B cell (primary cell): ENCODE measurements at regions of chr9 and their contacts with region 1.

Region 1: DNA sequence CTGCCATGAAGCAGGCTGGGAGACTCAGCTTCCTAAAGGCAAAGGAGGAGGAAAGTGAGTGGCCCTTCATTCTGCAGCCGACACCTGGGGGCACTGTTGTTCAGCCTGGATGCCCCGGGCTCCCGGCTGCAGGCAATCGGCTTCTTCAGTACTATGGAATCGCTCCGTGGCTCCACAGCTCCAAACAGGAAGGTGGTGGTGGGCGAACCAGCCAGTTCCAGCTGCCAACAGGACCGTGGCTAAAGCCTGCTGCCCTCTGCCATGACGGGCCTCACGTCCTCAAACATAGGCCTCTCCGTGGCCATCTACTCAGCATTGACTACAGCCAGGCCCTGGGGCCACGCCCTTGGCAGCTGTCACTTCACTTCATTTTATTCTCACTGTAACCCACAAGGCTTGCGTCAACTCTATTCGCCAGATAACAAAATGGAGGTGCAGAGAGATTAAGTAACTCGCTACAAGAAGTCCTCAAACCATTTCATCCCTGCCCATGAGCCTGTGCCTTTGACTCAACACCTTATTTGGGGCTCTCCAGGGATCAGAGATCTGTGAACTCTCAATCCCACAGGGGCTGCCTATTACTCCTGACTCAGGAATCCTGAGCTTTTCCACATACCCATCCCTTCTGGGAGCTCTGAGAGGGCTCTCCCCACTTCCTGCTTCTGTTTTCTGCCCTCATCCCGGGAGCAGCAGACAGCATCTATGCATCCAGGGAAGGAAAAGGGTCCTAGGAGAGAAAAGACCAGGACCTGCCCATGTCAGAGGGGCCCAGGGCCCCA is 38.0 kb downstream of the PAX5 start:
- DNase-seq: peak; percentile 86
- ATAC-seq: peak; percentile 34
- H3K4me3 ChIP-seq: peak overlapping the region in 4 of 5 experiments; percentile 16 to 58 (median 33)
- H3K4me3 Mint-ChIP-seq: peak overlapping the region; percentile 74
- H3K27ac ChIP-seq: peak overlapping the region; percentile 97 to 98
- H3K27ac Mint-ChIP-seq: peak overlapping the region; percentile 96
- H3K4me1 ChIP-seq: peaks cover 96 to 99% of the 10 kb centered on the region in 2 donors
- H3K4me1 Mint-ChIP-seq: peaks cover 94% of the 10 kb centered on the region
- H3K27me3 ChIP-seq: no peaks in the 10 kb centered on the region
- H3K27me3 Mint-ChIP-seq: no peaks in the 10 kb centered on the region
- CTCF ChIP-seq: peak; percentile 76

Region 2: GRCh38 chr9:36935768-36936497 is 60.2 kb before region 1 on chr9:
- CTCF ChIA-PET with region 1: no interaction called
- POLR2A ChIA-PET with region 1: no interaction called
- intact Hi-C with region 1: loop called (anchors 10 kb)
- DNase-seq: no peak
- ATAC-seq: peak; percentile 74
- H3K4me3 ChIP-seq: no peak overlapping the region
- H3K4me3 Mint-ChIP-seq: peak overlapping the region; percentile 27
- H3K27ac ChIP-seq: peak overlapping the region; percentile 9 to 60
- H3K27ac Mint-ChIP-seq: peak overlapping the region; percentile 88
- H3K4me1 ChIP-seq: peaks cover 33 to 66% of the 10 kb centered on the region in 2 donors
- H3K4me1 Mint-ChIP-seq: peaks cover 79% of the 10 kb centered on the region
- H3K27me3 ChIP-seq: no peaks in the 10 kb centered on the region
- H3K27me3 Mint-ChIP-seq: no peaks in the 10 kb centered on the region
- CTCF ChIP-seq: no peak

Region 3: DNA sequence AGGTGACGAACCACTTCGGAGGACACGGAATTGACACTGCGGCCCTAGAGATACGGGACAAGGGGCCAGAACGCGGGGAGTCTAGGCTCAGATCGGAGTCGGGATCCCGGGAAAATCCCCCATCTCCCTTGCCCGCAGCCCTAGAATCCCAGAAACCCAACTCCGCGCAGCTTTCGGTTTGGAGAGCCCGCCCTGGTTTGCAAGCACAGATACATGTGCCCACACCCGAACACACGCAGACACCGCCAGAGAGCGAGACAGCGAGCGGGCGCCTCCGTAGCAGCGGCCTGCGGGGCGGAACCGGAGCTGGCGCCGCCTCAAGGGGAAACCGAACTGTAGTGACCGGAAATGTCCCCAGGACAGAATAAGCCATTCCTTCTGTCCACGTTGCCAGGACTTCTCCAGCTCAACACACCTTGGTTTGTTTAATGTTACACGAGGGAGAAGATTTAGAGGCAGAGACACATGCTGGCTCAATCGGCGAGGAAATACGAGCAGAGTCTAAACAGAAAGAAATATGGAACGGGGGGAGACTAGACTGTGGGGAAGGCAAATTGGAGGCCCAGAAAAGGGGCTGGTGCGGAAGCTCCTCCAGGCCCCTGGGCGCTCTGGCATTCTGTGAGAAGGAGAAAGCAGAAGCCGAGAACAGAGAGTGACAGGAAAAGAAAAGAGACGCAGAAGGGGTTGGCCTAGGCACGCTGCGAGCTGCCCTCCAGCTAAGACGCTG is 40.8 kb after region 1 on chr9:
- CTCF ChIA-PET with region 1: interaction called, 81 read pairs
- POLR2A ChIA-PET with region 1: interaction called, 19 read pairs
- intact Hi-C with region 1: loop called (anchors 1 kb)
- DNase-seq: peak; percentile 90
- ATAC-seq: peak; percentile 35
- H3K4me3 ChIP-seq: peak overlapping the region; percentile 42 to 95 (median 86)
- H3K4me3 Mint-ChIP-seq: peak overlapping the region; percentile 89
- H3K27ac ChIP-seq: peak overlapping the region; percentile 98 to 100
- H3K27ac Mint-ChIP-seq: peak overlapping the region; percentile 96
- H3K4me1 ChIP-seq: peaks cover 42 to 64% of the 10 kb centered on the region in 2 donors
- H3K4me1 Mint-ChIP-seq: peaks cover 62% of the 10 kb centered on the region
- H3K27me3 ChIP-seq: no peaks in the 10 kb centered on the region
- H3K27me3 Mint-ChIP-seq: no peaks in the 10 kb centered on the region
- CTCF ChIP-seq: no peak

Region 4: GRCh38 chr9:37187713-37188439 is 191.8 kb after region 1 on chr9:
- CTCF ChIA-PET with region 1: interaction called, 17 read pairs
- POLR2A ChIA-PET with region 1: interaction called, 4 read pairs
- intact Hi-C with region 1: loop called (anchors 5 kb)
- DNase-seq: no peak
- ATAC-seq: peak; percentile 78
- H3K4me3 ChIP-seq: peak overlapping the region; percentile 29 to 56 (median 41)
- H3K4me3 Mint-ChIP-seq: peak overlapping the region; percentile 82
- H3K27ac ChIP-seq: peak overlapping the region; percentile 89 to 92
- H3K27ac Mint-ChIP-seq: peak overlapping the region; percentile 70
- H3K4me1 ChIP-seq: peaks cover 46 to 76% of the 10 kb centered on the region in 2 donors
- H3K4me1 Mint-ChIP-seq: peaks cover 75% of the 10 kb centered on the region
- H3K27me3 ChIP-seq: no peaks in the 10 kb centered on the region
- H3K27me3 Mint-ChIP-seq: no peaks in the 10 kb centered on the region
- CTCF ChIP-seq: no peak

Region 5: DNA sequence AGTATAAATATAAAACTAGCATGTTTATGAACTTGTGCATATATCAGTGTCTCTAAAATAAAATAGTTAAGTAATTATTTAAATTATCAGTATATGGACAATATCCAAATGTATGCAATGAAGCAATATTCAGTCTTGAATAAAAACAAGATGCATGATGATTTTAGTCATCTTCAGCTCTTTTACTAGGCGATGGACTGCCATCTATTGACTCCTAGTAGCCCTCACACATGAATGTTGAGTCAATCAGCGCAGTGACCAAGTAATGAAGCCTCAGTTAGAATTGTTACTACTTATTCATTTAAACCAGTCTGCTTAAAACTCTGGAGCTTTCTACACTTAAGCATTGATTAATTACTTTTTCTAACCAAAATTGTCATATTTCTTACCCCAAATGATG is 333.5 kb after region 1 on chr9:
- CTCF ChIA-PET with region 1: interaction called, 180 read pairs
- POLR2A ChIA-PET with region 1: interaction called, 6 read pairs
- intact Hi-C with region 1: loop called (anchors 2 kb)
- DNase-seq: peak; percentile 75
- ATAC-seq: peak; percentile 40
- H3K4me3 ChIP-seq: no peak overlapping the region
- H3K4me3 Mint-ChIP-seq: peak overlapping the region; percentile 44
- H3K27ac ChIP-seq: peak overlapping the region in 1 of 2 donors; percentile 4
- H3K27ac Mint-ChIP-seq: peak overlapping the region; percentile 90
- H3K4me1 ChIP-seq: peaks cover 25 to 84% of the 10 kb centered on the region in 2 donors
- H3K4me1 Mint-ChIP-seq: peaks cover 58% of the 10 kb centered on the region
- H3K27me3 ChIP-seq: no peaks in the 10 kb centered on the region
- H3K27me3 Mint-ChIP-seq: no peaks in the 10 kb centered on the region
- CTCF ChIP-seq: peak; percentile 82